CD4-positive, alpha-beta T cell (primary cell): ENCODE measurements at regions of chr5 and their contacts with region 1.

Region 1: DNA sequence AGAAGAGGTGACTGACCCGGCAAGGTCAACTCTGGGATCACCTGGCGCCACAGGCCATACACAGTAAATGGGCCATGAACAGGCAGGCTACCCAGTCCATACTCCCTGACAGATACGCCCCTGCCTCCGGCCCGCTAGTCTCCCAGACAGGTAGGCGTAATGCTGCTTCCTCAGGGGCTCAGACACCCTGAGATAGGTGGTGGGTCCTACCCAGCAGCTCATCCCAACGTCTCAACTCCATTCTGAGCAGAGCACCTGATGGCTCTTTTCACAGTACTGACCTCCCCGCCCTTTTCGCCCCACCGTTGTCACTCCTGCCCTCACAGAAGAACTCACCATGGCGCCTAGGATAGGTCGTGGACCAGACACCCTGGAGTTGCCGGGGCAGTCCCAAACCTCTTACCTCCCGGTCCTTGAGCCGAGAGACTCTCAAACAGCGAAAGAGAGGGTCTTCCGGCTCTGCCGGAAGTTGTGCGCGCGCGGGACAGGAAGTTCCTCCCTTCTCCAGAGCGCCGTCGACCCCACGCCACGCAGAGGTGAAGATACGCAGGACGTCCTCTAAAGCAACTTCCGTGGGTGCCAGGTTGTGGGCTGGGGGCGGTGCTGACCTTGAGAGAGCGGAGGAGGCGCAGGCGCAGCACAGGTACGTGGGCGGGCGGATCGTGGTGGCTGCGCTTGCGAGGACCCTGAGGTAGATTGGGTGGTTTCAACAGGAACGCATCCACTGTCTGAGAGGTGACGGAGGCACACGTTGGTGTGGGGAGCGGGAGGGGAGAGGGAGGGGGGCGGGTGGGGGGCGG is at the start of gene TMEM161B:
- DNase-seq: peak; percentile 91 to 99 (median 93)
- ATAC-seq: peak; percentile 95
- H3K4me3 ChIP-seq: peak within 1 kb of the TSS; percentile 89
- H3K4me3 Mint-ChIP-seq: peak within 1 kb of the TSS; percentile 97
- H3K27ac ChIP-seq: peak within 1 kb of the TSS; percentile 81 to 87
- H3K27ac Mint-ChIP-seq: peak within 1 kb of the TSS; percentile 96
- H3K4me1 ChIP-seq: peaks cover 27% of the 10 kb centered on the region
- H3K4me1 Mint-ChIP-seq: peaks cover 78% of the 10 kb centered on the region
- H3K27me3 ChIP-seq: no peaks in the 10 kb centered on the region
- H3K27me3 Mint-ChIP-seq: no peaks in the 10 kb centered on the region
- CTCF ChIP-seq: no peak
- total RNA-seq, gene TMEM161B: 16.7 to 19.6 TPM

Region 2: GRCh38 chr5:86617756-86618576 is 1650.6 kb before region 1 on chr5 and contains the start of gene COX7C:
- CTCF ChIA-PET with region 1: no interaction called
- POLR2A ChIA-PET with region 1: no interaction called
- intact Hi-C with region 1: loop called (anchors 2 to 5 kb)
- DNase-seq: peak; percentile 84 to 98 (median 90)
- ATAC-seq: peak; percentile 93
- H3K4me3 ChIP-seq: peak within 1 kb of the TSS; percentile 79
- H3K4me3 Mint-ChIP-seq: peak within 1 kb of the TSS; percentile 93
- H3K27ac ChIP-seq: peak within 1 kb of the TSS; percentile 92 to 94
- H3K27ac Mint-ChIP-seq: peak within 1 kb of the TSS; percentile 98
- H3K4me1 ChIP-seq: peaks cover 14% of the 10 kb centered on the region
- H3K4me1 Mint-ChIP-seq: peaks cover 39% of the 10 kb centered on the region
- H3K27me3 ChIP-seq: peaks cover 0 to 8% of the 10 kb centered on the region in 2 experiments
- H3K27me3 Mint-ChIP-seq: peaks cover 17% of the 10 kb centered on the region
- CTCF ChIP-seq: no peak
- total RNA-seq, gene COX7C: 467 to 482 TPM

Region 3: GRCh38 chr5:87412630-87413342 is 855.8 kb before region 1 on chr5 and contains the start of gene CCNH:
- CTCF ChIA-PET with region 1: no interaction called
- POLR2A ChIA-PET with region 1: no interaction called
- intact Hi-C with region 1: loop called in 1 of 2 experiments (anchors 5 kb)
- DNase-seq: peak; percentile 91 to 99 (median 95)
- ATAC-seq: peak; percentile 95
- H3K4me3 ChIP-seq: peak within 1 kb of the TSS; percentile 95
- H3K4me3 Mint-ChIP-seq: peak within 1 kb of the TSS; percentile 97
- H3K27ac ChIP-seq: peak within 1 kb of the TSS; percentile 90 to 98
- H3K27ac Mint-ChIP-seq: peak within 1 kb of the TSS; percentile 96
- H3K4me1 ChIP-seq: peaks cover 19% of the 10 kb centered on the region
- H3K4me1 Mint-ChIP-seq: peaks cover 50% of the 10 kb centered on the region
- H3K27me3 ChIP-seq: no peaks in the 10 kb centered on the region
- H3K27me3 Mint-ChIP-seq: no peaks in the 10 kb centered on the region
- CTCF ChIP-seq: no peak
- total RNA-seq, gene CCNH: 309 to 311 TPM

Region 4: GRCh38 chr5:88140856-88141752 is 127.5 kb before region 1 on chr5:
- CTCF ChIA-PET with region 1: no interaction called
- POLR2A ChIA-PET with region 1: no interaction called
- intact Hi-C with region 1: loop called in 1 of 2 experiments (anchors 10 kb)
- DNase-seq: peak; percentile 38 to 92 (median 68)
- ATAC-seq: peak; percentile 89
- H3K4me3 ChIP-seq: peak overlapping the region; percentile 42
- H3K4me3 Mint-ChIP-seq: no peak overlapping the region
- H3K27ac ChIP-seq: no peak overlapping the region
- H3K27ac Mint-ChIP-seq: no peak overlapping the region
- H3K4me1 ChIP-seq: peaks cover 54% of the 10 kb centered on the region
- H3K4me1 Mint-ChIP-seq: peaks cover 8% of the 10 kb centered on the region
- H3K27me3 ChIP-seq: peaks cover 61 to 82% of the 10 kb centered on the region in 2 experiments
- H3K27me3 Mint-ChIP-seq: peaks cover 25% of the 10 kb centered on the region
- CTCF ChIP-seq: no peak

Region 5: DNA sequence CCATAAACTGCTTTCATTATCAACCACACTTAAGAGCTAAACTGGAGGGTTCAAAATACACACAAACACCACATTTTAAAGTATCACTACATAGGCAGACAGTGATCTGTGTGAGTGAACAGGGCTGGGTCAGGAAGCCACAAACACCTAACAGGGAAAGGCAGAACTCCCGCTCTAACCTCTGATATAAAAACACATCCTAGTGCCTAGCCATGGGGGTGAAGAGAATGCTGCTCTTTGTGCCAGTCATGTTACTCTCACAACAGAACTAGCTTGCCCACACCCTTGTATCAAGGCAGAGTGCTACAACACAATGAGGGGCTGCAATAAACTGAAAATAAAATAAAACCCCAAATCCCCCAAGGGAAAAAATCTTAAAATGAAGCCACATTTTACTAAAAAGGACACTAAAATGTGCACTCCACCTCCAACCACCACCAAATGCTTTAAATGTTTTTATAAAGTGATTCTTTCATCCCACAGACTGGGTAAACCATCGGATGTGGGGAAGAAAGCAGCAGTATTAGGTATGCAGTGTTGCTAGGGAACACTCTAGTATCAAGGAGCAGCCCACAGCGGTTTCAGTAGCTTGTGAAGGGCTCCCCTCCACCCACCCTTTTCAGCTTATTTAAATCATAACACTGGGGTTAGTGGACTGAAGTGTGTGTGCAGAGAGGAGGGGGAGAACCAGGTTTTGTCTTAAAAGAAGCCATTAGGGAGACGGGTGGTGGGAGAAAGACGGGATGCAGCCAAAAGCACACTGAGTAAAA is 64.4 kb before region 1 on chr5:
- CTCF ChIA-PET with region 1: no interaction called
- POLR2A ChIA-PET with region 1: no interaction called
- intact Hi-C with region 1: loop called in 1 of 2 experiments (anchors 10 kb)
- DNase-seq: peak in 10 of 14 experiments; percentile 15 to 83 (median 24)
- ATAC-seq: peak; percentile 98
- H3K4me3 ChIP-seq: peak overlapping the region; percentile 11
- H3K4me3 Mint-ChIP-seq: peak overlapping the region; percentile 43
- H3K27ac ChIP-seq: peak overlapping the region in 1 of 2 donors; percentile 53
- H3K27ac Mint-ChIP-seq: peak overlapping the region; percentile 83
- H3K4me1 ChIP-seq: peaks cover 8% of the 10 kb centered on the region
- H3K4me1 Mint-ChIP-seq: peaks cover 15% of the 10 kb centered on the region
- H3K27me3 ChIP-seq: no peaks in the 10 kb centered on the region
- H3K27me3 Mint-ChIP-seq: no peaks in the 10 kb centered on the region
- CTCF ChIP-seq: no peak

Region 6: GRCh38 chr5:88236866-88237642 is 31.5 kb before region 1 on chr5:
- CTCF ChIA-PET with region 1: no interaction called
- POLR2A ChIA-PET with region 1: no interaction called
- intact Hi-C with region 1: no loop called
- DNase-seq: no peak
- ATAC-seq: no peak
- H3K4me3 ChIP-seq: no peak overlapping the region
- H3K4me3 Mint-ChIP-seq: no peak overlapping the region
- H3K27ac ChIP-seq: no peak overlapping the region
- H3K27ac Mint-ChIP-seq: no peak overlapping the region
- H3K4me1 ChIP-seq: no peaks in the 10 kb centered on the region
- H3K4me1 Mint-ChIP-seq: peaks cover 14% of the 10 kb centered on the region
- H3K27me3 ChIP-seq: no peaks in the 10 kb centered on the region
- H3K27me3 Mint-ChIP-seq: no peaks in the 10 kb centered on the region
- CTCF ChIP-seq: no peak

Region 7: DNA sequence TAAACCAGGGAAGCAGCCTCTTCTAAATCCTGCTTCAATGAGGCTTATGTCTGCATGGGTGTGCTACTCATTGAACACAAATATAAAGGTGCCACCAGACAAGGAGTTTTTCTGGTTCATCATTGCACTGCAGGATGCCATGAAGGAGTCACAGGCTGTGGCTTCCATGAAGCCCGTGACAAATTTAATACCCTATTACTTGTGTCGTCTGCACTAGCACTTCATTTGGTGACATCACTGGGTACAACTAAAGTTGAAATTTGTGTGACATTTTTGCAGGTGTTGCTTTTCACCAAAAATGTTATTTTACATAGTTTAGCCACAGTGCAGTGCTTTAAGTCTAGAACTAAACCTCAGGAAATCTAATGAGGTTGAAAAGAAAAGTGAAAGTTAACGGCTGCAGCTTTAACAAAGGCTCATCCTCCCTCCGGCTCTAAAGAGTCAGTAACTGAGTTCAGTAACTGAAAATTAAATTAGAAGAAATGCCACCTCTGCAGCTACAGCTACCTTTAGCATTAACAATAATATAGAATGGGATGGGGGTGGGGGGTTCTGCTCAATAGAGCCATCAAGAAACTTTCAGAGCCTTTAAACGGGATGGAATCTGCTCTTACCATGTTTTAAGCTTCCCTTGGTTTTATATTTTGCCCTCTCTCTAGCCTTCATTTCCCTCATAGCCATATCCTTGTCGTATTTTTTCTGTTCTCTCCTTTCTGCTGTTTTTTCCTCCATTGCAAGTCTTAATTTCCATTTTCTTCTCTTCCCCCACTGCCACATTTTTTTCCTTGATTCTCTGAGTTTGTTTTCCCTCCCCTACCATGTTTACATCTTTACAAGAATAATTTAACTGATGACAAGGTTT is 233.8 kb after region 1 on chr5:
- CTCF ChIA-PET with region 1: no interaction called
- POLR2A ChIA-PET with region 1: no interaction called
- intact Hi-C with region 1: no loop called
- DNase-seq: peak in 3 of 14 experiments; percentile 35 to 64 (median 44)
- ATAC-seq: peak; percentile 71
- H3K4me3 ChIP-seq: peak overlapping the region; percentile 66
- H3K4me3 Mint-ChIP-seq: peak overlapping the region; percentile 95
- H3K27ac ChIP-seq: peak overlapping the region; percentile 55 to 70
- H3K27ac Mint-ChIP-seq: peak overlapping the region; percentile 86
- H3K4me1 ChIP-seq: no peaks in the 10 kb centered on the region
- H3K4me1 Mint-ChIP-seq: peaks cover 17% of the 10 kb centered on the region
- H3K27me3 ChIP-seq: peaks cover 0 to 3% of the 10 kb centered on the region in 2 experiments
- H3K27me3 Mint-ChIP-seq: peaks cover 6% of the 10 kb centered on the region
- CTCF ChIP-seq: no peak